WTC11 (cell line): ENCODE measurements at regions of chr10 and their contacts with region 1.

Region 1: GRCh38 chr10:59387951-59388670 is 25.8 kb upstream of the FAM13C start:
- DNase-seq: no peak
- ATAC-seq: no peak
- H3K4me3 Mint-ChIP-seq: no peak overlapping the region
- H3K27ac Mint-ChIP-seq: no peak overlapping the region
- H3K4me1 Mint-ChIP-seq: peaks cover 13% of the 10 kb centered on the region
- H3K27me3 Mint-ChIP-seq: no peaks in the 10 kb centered on the region
- CTCF ChIP-seq: no peak

Region 2: DNA sequence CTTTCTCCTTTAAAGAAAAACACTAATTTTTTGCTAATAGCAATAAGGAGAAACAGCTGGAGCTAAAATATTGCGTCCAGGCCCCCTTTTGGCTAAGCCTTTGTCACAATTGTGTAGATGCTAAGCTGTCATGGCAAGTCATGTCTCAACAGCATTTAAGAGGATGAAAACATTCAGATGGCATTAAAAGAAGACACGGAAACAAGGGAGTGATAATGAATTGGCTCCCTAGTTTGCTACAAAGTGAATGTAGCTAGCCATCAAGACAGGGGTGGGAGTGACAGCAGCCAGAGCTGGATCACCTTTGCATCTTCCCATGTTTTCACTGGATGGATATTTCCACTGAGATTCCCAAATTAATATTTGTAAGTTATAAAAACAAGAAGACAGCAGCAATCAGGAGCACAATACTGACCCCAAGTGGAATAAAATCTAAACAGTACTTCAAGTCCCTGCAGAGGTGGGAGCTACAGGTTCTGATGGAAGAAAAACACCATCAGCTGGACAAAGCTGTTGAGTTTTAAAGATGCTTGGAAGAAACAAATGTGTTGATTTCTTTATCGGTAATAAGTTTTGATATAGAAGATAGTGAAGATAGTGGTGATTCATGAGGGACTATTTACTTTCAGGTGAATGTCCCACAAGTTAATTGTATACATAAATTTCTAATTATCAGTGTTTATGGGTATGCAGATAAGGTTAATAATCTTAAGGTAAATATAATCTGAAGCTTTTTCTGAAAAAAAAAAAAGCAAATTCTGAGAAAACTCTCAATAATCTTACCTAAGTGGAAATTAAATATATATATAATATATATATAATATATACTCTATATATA is 192.1 kb after region 1 on chr10:
- CTCF ChIA-PET with region 1: interaction called, 10 read pairs
- POLR2A ChIA-PET with region 1: no interaction called
- DNase-seq: no peak
- ATAC-seq: peak; percentile 38
- H3K4me3 Mint-ChIP-seq: no peak overlapping the region
- H3K27ac Mint-ChIP-seq: no peak overlapping the region
- H3K4me1 Mint-ChIP-seq: peaks cover 6% of the 10 kb centered on the region
- H3K27me3 Mint-ChIP-seq: no peaks in the 10 kb centered on the region
- CTCF ChIP-seq: no peak